H1 (cell line): ENCODE measurements at regions of chr9 and their contacts with region 1.

Region 1: GRCh38 chr9:15529566-15530324 is 19.0 kb upstream of the PSIP1 start:
- DNase-seq: no peak
- H3K4me3 ChIP-seq: no peak overlapping the region
- H3K27ac ChIP-seq: no peak overlapping the region
- H3K4me1 ChIP-seq: peaks cover 0 to 2% (median 0%) of the 10 kb centered on the region in 4 experiments; a peak in 1 of 7 replicates
- H3K27me3 ChIP-seq: no peaks in the 10 kb centered on the region
- CTCF ChIP-seq: no peak
- EP300 ChIP-seq: no peak
- POLR2A ChIP-seq: no peak
- RAD21 ChIP-seq: no peak

Region 2: DNA sequence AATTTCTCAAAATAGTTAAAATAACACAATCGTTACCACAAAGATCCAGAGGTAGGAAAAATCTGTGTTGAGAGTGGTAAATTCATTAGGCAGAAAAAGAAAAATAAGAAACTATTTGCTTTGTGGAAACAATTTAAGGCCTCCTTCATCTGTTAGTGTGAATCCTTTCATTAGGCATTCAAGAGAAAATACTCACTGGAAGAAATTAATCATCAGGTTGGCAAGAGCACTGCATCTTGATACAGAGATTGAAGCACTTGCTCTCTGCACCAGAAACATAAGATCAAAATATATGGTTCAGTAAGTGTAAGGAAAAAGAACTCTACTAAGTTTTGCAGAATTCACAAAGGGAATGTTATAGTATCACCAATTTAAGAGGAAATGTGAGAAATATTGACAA is 267.2 kb before region 1 on chr9:
- CTCF ChIA-PET with region 1: no interaction called
- POLR2A ChIA-PET with region 1: no interaction called
- DNase-seq: no peak
- H3K4me3 ChIP-seq: no peak overlapping the region
- H3K27ac ChIP-seq: no peak overlapping the region
- H3K4me1 ChIP-seq: peaks cover 0 to 3% (median 0%) of the 10 kb centered on the region in 4 experiments; a peak in 2 of 7 replicates
- H3K27me3 ChIP-seq: no peaks in the 10 kb centered on the region
- CTCF ChIP-seq: no peak
- EP300 ChIP-seq: no peak
- POLR2A ChIP-seq: no peak
- RAD21 ChIP-seq: no peak

Region 3: DNA sequence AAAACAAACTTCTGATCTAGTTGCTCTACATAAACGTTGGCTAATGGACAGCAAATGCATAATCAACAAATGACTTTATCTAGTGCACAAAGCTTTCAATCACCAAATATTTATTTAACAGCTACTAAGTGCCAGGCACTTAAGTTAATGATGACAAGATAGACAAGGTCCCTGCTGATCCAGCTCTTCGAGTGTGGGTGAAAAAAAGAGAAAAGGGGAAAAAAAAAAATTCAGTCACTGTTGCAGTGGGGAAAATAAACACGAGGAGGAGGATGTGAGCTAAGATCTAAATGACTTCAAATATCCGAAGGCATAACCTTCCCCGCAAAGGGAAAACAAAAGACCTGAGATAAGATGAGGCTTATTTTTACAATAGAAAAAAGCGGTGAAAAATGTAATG is 28.6 kb before region 1 on chr9:
- CTCF ChIA-PET with region 1: interaction called, 10 read pairs
- POLR2A ChIA-PET with region 1: interaction called, 8 read pairs
- DNase-seq: no peak
- H3K4me3 ChIP-seq: no peak overlapping the region
- H3K27ac ChIP-seq: no peak overlapping the region
- H3K4me1 ChIP-seq: no peaks in the 10 kb centered on the region
- H3K27me3 ChIP-seq: no peaks in the 10 kb centered on the region
- CTCF ChIP-seq: no peak
- EP300 ChIP-seq: no peak
- POLR2A ChIP-seq: no peak
- RAD21 ChIP-seq: no peak

Region 4: DNA sequence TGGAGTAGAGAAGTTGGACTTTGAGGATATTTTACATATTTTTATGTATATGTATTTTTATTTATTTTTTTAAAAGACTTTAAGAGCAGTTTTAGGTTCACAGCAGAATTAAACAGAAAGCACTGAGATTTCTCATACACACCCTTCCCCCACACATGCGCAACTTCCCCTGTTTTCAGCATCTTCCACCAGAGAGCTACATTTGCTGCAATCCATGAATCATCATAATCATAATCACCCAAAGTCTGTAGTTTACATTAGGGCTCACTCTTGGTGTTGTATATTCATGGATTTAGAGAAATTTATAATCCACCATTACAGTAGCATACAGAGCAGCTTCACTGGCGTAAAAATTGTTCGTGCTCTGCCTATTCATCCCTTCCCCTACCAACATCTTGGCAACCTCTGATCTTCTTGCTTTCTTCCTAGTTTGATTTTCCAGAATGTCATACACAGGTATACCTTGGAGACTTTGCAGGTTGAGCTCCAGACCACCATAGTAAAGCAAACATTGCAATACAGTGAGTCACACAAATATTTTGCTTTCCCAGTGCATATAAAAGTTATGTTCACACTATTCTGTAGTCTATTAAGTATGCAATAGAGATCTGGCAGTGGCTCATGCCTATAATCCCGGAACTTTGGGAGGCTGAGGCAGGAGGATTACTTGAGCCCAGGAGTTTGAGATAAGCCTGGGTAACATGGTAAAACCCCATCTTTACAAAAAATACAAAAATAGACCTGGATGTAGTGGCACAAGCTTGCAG is 13.5 kb after region 1 on chr9:
- CTCF ChIA-PET with region 1: interaction called, 13 read pairs
- POLR2A ChIA-PET with region 1: interaction called, 3 read pairs
- DNase-seq: no peak
- H3K4me3 ChIP-seq: no peak overlapping the region
- H3K27ac ChIP-seq: no peak overlapping the region
- H3K4me1 ChIP-seq: no peaks in the 10 kb centered on the region
- H3K27me3 ChIP-seq: no peaks in the 10 kb centered on the region; a peak in 1 of 7 replicates
- CTCF ChIP-seq: no peak
- EP300 ChIP-seq: no peak
- POLR2A ChIP-seq: no peak
- RAD21 ChIP-seq: no peak

Region 5: DNA sequence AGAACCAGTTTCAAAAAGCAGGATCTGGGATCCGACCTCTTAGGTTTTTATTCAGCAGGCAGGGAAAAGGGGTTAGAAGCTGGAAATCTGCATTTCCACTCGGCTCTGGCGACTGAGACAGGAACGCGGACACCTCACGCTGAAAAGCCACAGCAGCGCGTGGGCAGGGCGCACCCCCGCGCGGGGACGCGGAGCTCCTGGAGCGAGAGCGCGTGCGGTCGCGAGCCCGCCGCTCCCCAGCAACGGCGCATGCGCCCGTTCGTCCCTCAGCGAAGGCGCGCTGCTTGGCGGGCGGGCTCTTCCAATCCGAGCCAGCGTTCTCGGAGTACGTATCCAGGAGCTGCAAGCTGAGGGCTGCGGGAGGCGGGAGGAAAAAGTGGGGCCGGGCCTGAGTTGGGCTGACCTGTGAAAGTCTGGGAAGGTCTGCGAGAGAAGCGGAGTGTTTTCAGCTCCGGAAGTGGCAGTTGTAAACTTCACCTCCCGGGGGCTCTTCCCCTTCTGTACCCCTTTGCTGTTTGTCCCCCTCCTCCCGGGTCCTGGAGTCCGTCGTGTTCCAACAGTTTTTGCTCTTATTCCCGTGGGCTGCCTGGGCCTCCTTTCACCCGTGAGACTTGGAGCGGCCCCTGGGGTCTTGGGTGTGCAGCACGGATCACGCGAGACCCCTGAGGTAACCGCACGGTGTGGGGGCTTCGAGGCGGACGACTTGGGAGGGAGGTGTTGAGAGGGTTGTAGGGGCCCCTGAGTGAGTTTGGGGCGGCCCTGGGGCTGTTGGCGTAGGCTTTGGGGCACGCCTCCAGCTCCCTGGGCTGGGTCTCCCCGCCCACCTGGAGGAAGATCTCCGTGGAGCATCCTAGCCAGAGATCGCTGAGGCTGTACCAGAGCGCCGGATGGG is 23.1 kb after region 1 on chr9 and contains the start of gene CCDC171:
- CTCF ChIA-PET with region 1: interaction called, 10 read pairs
- POLR2A ChIA-PET with region 1: no interaction called
- DNase-seq: peak; percentile 88
- H3K4me3 ChIP-seq: peak within 1 kb of the TSS; percentile 80 to 92 (median 81)
- H3K27ac ChIP-seq: peak within 1 kb of the TSS; percentile 81
- H3K4me1 ChIP-seq: peaks cover 0 to 2% (median 1%) of the 10 kb centered on the region in 4 experiments; a peak in 1 of 7 replicates
- H3K27me3 ChIP-seq: no peaks in the 10 kb centered on the region
- CTCF ChIP-seq: no peak
- EP300 ChIP-seq: no peak
- POLR2A ChIP-seq: peak; percentile 66 to 82
- RAD21 ChIP-seq: no peak
- total RNA-seq, gene CCDC171: 1.9 and 2.3 TPM in 2 replicates

Region 6: GRCh38 chr9:15785584-15785983 is 255.8 kb after region 1 on chr9:
- CTCF ChIA-PET with region 1: no interaction called
- POLR2A ChIA-PET with region 1: no interaction called
- DNase-seq: no peak
- H3K4me3 ChIP-seq: no peak overlapping the region
- H3K27ac ChIP-seq: no peak overlapping the region
- H3K4me1 ChIP-seq: no peaks in the 10 kb centered on the region
- H3K27me3 ChIP-seq: no peaks in the 10 kb centered on the region
- CTCF ChIP-seq: no peak
- EP300 ChIP-seq: no peak
- POLR2A ChIP-seq: no peak
- RAD21 ChIP-seq: no peak